Activated naive CD4-positive, alpha-beta T cell treated with anti-CD3 and anti-CD28 coated beads for 36 hours (primary cell): ENCODE measurements at regions of chr3 and their contacts with region 1.

Region 1: GRCh38 chr3:112437146-112438022 is 61.9 kb downstream of the BTLA start:
- DNase-seq: peak; percentile 20
- H3K4me3 Mint-ChIP-seq: no peak overlapping the region
- H3K27ac Mint-ChIP-seq: peak overlapping the region; percentile 62
- H3K4me1 Mint-ChIP-seq: peaks cover 52% of the 10 kb centered on the region
- H3K27me3 Mint-ChIP-seq: no peaks in the 10 kb centered on the region

Region 2: GRCh38 chr3:112327371-112327951 is 109.9 kb before region 1 on chr3:
- CTCF ChIA-PET with region 1: interaction called, 41 read pairs
- intact Hi-C with region 1: loop called (anchors 1 kb)
- DNase-seq: peak; percentile 65
- H3K4me3 Mint-ChIP-seq: no peak overlapping the region
- H3K27ac Mint-ChIP-seq: no peak overlapping the region
- H3K4me1 Mint-ChIP-seq: peaks cover 13% of the 10 kb centered on the region
- H3K27me3 Mint-ChIP-seq: peaks cover 9% of the 10 kb centered on the region

Region 3: DNA sequence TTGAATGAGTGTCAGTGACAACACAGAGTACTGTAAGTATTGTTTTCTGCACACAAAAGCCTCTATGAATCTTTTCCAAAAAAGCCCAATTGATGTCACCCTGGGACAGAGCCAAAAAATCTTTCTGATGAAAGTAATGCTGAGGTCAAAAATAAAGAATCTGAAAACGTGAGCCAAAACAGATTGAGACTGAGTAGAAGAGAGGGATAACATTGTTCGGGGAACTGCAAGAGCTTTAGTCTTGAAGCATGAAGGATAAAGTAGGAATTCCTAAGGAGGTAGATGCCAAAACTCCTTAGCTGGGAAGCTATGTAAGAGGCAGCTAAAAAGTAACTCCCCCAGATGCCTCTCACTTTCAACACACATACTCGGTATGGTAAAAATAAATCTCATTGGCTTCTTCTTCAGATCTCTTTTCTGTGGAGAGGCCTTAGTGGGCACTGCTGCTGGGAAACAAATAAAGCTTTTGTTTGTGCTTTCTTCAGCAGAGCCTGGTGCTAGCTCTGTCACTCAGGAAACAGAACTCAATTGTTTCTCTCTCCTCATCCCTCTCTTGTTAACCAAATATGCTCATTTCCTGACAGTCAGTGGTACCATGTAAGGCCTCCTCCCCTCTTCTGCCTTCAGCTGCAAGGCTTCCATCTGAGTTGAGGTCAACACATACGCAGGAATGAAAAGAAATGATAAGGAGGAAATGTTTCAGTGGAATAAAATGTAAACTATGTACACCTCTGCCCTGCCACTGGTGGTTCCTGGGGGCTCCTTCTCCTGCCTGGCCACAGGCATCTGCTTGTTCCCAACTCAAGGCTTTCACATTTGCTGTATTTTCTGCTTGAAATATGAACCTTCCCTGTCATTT is 46.4 kb before region 1 on chr3:
- CTCF ChIA-PET with region 1: interaction called, 5 read pairs
- intact Hi-C with region 1: loop called (anchors 2 kb)
- DNase-seq: peak; percentile 36
- H3K4me3 Mint-ChIP-seq: peak overlapping the region; percentile 10
- H3K27ac Mint-ChIP-seq: peak overlapping the region; percentile 66
- H3K4me1 Mint-ChIP-seq: peaks cover 58% of the 10 kb centered on the region
- H3K27me3 Mint-ChIP-seq: no peaks in the 10 kb centered on the region

Region 4: GRCh38 chr3:112460519-112461195 is 23.3 kb after region 1 on chr3:
- CTCF ChIA-PET with region 1: interaction called, 12 read pairs
- intact Hi-C with region 1: loop called (anchors 1 kb)
- DNase-seq: no peak
- H3K4me3 Mint-ChIP-seq: no peak overlapping the region
- H3K27ac Mint-ChIP-seq: peak overlapping the region; percentile 79
- H3K4me1 Mint-ChIP-seq: peaks cover 60% of the 10 kb centered on the region
- H3K27me3 Mint-ChIP-seq: no peaks in the 10 kb centered on the region

Region 5: DNA sequence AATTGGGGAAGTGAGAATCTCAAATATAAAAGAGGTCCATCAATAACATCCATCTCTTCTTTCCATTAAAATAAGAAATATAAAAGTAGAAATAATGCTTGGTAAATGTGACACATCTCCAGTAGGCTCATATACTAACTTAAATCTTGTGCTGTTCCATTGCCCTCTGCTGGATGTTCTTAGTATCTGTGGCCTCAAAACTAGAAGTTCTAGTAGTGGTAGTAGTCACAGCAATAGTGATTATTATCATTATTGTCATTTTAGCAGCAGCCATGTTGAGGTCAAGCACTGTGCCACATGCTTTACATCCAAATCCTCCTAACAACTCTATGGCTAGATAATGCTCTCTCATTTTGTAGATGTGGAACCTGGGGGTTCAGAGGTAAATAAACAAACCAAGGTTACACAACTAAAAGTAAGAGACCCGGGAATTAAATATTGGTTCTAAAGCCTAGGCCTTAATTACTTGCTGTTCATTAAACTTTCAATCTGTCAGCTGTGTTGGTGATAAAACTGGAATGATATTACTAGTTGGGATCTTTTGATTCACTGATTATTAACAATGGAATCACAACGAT is 82.1 kb after region 1 on chr3:
- CTCF ChIA-PET with region 1: interaction called, 4 read pairs
- intact Hi-C with region 1: loop called (anchors 1 kb)
- DNase-seq: peak; percentile 53
- H3K4me3 Mint-ChIP-seq: no peak overlapping the region
- H3K27ac Mint-ChIP-seq: peak overlapping the region; percentile 84
- H3K4me1 Mint-ChIP-seq: peaks cover 34% of the 10 kb centered on the region
- H3K27me3 Mint-ChIP-seq: no peaks in the 10 kb centered on the region

Region 6: DNA sequence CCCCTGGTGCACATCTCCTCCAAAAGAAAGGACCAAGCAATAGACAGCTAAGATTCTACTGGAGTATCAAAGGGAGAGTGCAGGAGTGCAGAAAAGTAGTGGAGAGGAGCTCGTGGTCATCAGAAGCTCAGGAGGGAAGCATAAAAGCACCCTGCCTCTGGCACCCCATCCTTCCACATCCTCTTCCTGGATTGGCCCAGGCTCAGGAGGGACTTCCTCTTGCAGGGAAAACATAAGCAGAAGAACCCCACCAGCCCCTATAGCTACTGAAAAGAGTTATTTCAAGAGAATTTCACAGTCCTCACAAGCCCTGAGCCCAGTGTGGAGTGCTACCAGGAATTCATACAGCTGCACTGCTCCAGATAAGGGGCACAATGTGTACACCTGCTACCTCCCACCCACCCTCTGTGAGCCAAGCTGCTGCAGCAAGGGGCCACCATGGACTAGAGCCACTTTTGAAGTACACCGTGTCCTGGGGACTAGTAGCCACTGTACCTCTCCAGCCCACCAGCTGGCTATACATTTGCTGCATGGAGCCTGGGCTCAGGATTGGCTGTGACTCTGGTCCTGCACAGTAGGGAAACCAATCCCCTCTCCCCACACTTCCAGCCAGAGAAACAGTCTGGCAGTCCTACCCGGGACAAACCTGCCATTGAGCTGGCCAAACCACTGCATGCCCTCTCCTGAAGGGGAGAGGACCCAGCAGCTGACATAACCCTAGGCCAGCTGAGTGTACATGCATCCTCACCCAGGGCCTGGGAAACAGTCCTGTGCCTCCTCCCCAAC is 494.5 kb after region 1 on chr3:
- CTCF ChIA-PET with region 1: no interaction called
- intact Hi-C with region 1: no loop called
- DNase-seq: no peak
- H3K4me3 Mint-ChIP-seq: no peak overlapping the region
- H3K27ac Mint-ChIP-seq: no peak overlapping the region
- H3K4me1 Mint-ChIP-seq: peaks cover 39% of the 10 kb centered on the region
- H3K27me3 Mint-ChIP-seq: no peaks in the 10 kb centered on the region